ENCODE measurements at regions of chr15 and their contacts with region 1.

Region 1: DNA sequence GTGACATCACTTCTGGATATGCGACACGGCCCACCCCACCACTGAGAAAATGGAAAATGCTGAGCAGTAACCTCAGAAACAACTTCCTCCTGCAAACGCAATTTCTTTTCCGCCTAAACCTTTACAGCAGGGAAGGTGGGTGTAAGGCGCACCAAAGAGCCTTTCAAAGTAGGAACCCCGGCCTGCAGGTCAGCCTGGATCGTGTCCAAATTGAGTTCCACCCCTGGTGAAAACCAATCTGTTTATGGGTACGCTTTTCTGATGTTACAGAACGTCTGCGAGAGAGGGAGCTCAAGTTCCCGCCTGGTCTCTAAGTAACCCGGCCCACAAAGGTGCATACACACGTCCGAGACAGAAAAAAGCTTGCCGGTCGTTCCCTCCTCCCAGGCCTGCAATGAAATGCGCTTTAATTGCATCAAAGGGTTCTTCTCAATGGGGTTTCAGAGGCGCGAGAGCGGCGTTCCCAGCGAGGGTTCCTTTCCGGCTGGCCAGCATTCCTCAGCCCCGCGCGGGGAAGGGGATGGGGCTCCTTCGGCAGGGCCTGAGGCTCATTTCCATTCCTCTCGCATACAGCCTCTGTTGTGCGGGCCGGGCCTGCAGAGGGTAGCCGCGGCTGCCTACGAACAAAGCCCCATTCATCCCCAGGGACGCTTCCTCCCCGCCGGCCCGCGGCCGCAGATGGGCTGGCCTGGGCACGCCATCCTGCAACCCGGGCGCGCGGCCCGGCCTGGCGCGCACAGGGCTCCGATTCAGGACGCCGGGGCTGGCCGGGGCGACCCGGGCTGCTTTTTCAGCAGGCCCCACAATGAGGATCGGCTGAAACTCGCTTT is 138.1 kb downstream of the TMCO5A start:
- DNase-seq: peak; percentile 52 to 94 (median 92)
- H3K4me3 ChIP-seq: peak overlapping the region; percentile 34 to 80 (median 64)
- H3K27ac ChIP-seq: peak overlapping the region; percentile 74 to 98 (median 95)
- H3K27me3 ChIP-seq: no peaks in the 10 kb centered on the region
- CTCF ChIP-seq: peak in 38 of 56 donors; percentile 4 to 49 (median 24)

Region 2: GRCh38 chr15:37900326-37901221 is 172.0 kb before region 1 on chr15:
- intact Hi-C with region 1: no loop called
- DNase-seq: no peak
- H3K4me3 ChIP-seq: no peak overlapping the region
- H3K27ac ChIP-seq: no peak overlapping the region
- H3K27me3 ChIP-seq: peaks cover 0 to 9% (median 0%) of the 10 kb centered on the region in 45 donors
- CTCF ChIP-seq: no peak

Region 3: DNA sequence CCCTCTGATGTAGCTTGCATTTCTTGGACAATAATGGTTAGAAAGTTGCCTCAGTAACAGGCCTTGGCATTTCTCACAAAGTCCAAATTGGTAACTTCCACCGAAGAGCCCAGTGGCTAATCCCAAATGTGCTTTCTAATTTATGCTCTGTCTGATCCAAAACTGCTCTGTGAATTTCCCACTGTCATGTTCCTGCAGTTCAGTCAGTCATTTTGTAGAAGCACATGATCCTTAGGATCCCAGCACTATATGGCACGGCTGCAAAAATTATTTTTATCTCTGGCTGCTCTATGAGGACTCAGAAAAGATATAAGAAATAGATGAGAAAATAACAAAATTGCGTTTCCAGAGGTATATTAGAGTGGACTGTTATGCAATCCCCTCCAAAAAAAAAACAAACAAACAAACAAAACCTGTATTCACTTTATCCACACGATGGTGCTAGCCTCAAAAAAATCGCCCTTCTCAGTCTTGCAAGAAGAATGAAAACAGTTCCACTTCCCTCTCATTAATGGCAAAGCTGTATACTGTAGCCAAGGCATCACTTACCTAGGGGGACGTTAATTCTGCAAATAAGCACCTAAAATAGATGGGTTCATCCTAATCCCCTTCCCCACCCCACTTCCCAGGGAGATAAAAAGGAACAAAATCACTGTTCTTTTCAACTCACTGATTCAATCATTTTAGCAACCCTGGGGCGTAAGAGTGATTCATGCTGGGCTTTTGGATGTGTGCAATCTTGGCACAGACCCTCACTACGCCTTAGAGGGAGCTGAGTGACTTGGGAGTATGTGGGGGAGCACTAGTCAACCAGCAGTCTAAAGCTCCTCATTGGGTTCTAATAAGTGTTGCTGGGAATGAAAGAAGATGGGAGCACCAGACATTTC is 76.9 kb before region 1 on chr15:
- intact Hi-C with region 1: loop called in 1 of 2 experiments (anchors 5 kb)
- DNase-seq: peak in 2 of 10 donors; percentile 40 to 58
- H3K4me3 ChIP-seq: peak overlapping the region in 50 of 59 donors; percentile 0 to 56 (median 28)
- H3K27ac ChIP-seq: peak overlapping the region; percentile 2 to 91 (median 81)
- H3K27me3 ChIP-seq: no peaks in the 10 kb centered on the region
- CTCF ChIP-seq: peak; percentile 61 to 98 (median 82)

Region 4: DNA sequence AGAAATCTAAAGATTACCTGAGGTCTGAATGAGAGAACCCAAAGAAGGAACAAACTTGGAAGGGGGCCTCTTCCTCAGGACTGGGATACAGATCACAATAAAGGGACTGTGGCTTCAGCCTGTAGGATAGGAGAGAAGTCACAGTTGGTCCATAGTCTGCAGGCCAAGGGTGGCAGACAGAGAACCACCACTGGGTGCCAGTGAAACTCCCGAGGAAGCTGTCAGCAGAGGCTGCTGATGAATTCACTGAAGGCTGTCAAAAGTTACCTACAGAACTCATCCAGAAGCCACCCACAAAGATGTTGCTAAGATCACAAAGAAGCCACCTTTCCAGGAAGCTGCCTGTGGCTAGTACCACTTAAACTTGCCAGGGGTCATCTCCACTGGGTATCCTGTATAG is 59.7 kb before region 1 on chr15:
- intact Hi-C with region 1: loop called in 1 of 2 experiments (anchors 5 kb)
- DNase-seq: no peak
- H3K4me3 ChIP-seq: no peak overlapping the region
- H3K27ac ChIP-seq: no peak overlapping the region
- H3K27me3 ChIP-seq: no peaks in the 10 kb centered on the region
- CTCF ChIP-seq: peak in 25 of 56 donors; percentile 7 to 53 (median 24)

Region 5: DNA sequence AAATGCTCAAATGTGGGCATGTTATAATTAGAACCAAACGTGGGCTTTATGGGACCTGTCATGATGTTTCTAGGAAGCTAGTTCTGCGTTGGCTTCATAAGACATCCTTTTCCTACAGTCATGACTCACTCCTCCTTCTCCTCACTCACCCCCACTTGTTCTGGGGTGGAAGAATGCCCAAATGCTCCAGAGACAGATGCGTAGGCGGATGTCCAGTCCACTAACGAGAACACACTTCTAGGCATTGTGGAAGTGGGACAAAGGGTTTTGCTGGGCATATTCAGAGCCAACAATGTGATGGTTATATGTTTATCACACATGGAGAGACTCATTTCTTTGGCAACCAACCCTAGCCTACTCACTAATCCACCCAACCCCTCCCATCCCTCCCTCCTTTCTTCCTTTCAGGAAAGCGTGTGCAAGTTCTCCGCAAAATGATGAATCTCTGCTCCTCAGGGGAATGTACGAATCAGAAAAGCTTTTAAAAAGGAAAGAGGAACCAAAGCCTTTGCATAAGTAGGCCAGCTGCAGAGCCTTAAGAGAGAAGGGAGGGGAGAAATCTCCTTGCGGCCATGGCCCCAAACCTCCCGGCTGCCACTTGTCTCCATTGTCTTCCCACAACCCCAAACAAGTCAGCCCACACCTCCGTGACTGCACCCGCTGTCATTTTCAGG is 57.1 kb after region 1 on chr15:
- intact Hi-C with region 1: loop called (anchors 2 to 5 kb)
- DNase-seq: peak in 8 of 10 donors; percentile 57 to 84 (median 63)
- H3K4me3 ChIP-seq: peak overlapping the region; percentile 27 to 70 (median 49)
- H3K27ac ChIP-seq: peak overlapping the region in 56 of 59 donors; percentile 49 to 89 (median 79)
- H3K27me3 ChIP-seq: no peaks in the 10 kb centered on the region
- CTCF ChIP-seq: peak in 2 of 56 donors; percentile 2 to 12

Region 6: DNA sequence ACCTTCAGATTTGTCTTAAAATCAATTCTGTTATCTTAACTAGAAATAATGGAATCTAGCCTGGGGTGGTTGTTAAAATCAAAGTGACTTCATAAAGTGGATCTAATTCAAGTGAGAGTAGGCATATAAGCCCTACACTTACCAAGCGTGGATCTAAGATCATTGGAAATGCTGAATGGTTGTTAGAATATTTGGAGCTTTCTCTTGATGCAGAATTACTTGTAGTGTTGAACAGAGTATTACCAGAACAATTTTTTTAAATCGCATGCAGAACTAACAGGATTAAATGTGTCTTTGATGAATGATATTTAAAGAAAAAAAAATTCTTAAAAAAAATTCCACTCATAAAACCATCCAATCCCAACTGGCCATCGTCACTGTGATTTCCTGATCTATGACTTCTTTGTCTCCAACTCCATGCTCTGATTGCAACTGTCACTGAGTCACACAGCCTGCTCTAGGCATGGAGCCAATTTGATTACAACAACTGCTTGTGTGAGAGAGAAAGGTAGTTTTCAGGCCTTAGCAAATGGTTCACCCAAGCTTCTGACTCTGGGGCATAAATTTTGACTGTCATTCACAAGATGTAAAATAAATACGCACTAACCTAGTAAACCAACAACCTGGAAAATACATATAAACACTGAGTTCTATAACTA is 154.2 kb after region 1 on chr15:
- intact Hi-C with region 1: loop called in 1 of 2 experiments (anchors 10 kb)
- DNase-seq: peak in 8 of 10 donors; percentile 9 to 89 (median 73)
- H3K4me3 ChIP-seq: peak overlapping the region in 24 of 59 donors; percentile 1 to 49 (median 18)
- H3K27ac ChIP-seq: peak overlapping the region; percentile 3 to 95 (median 86)
- H3K27me3 ChIP-seq: no peaks in the 10 kb centered on the region
- CTCF ChIP-seq: peak in 6 of 56 donors; percentile 13 to 28 (median 14)

Region 7: DNA sequence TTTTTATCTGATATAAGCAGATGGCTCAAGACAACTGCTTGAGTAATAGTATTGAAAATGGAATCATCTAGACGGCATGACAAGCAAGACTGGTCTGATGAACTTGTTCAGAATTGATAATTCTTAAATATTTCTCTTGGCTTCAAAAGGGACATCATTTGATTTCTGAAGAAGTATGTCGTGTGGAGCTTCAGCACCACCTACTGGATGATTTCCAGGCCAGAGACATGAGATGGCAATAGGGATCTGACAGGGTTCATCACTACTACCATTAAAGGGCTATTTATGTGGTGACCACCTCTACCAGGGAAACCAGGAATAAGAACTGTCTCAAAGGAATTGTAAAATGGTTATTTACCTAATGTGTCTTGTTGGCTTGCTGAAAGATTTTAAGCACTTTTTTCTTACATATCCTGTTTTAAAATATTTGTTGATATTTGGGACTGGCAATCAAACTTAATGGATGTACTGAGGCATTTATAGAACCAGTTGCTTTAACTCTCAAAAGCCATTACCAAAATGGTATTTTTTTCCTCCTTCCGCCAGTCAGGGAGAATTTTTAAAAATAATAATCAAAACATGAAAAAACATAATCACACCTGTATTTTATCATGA is 281.9 kb after region 1 on chr15:
- intact Hi-C with region 1: loop called (anchors 2 to 10 kb)
- DNase-seq: peak in 8 of 10 donors; percentile 24 to 89 (median 55)
- H3K4me3 ChIP-seq: no peak overlapping the region
- H3K27ac ChIP-seq: peak overlapping the region in 8 of 59 donors; percentile 3 to 57 (median 24)
- H3K27me3 ChIP-seq: no peaks in the 10 kb centered on the region
- CTCF ChIP-seq: peak; percentile 38 to 98 (median 86)

Measured in dorsolateral prefrontal cortex (tissue), 120 donors.